WTC11 (cell line): ENCODE measurements at regions of chr22 and their contacts with region 1.

Region 1: DNA sequence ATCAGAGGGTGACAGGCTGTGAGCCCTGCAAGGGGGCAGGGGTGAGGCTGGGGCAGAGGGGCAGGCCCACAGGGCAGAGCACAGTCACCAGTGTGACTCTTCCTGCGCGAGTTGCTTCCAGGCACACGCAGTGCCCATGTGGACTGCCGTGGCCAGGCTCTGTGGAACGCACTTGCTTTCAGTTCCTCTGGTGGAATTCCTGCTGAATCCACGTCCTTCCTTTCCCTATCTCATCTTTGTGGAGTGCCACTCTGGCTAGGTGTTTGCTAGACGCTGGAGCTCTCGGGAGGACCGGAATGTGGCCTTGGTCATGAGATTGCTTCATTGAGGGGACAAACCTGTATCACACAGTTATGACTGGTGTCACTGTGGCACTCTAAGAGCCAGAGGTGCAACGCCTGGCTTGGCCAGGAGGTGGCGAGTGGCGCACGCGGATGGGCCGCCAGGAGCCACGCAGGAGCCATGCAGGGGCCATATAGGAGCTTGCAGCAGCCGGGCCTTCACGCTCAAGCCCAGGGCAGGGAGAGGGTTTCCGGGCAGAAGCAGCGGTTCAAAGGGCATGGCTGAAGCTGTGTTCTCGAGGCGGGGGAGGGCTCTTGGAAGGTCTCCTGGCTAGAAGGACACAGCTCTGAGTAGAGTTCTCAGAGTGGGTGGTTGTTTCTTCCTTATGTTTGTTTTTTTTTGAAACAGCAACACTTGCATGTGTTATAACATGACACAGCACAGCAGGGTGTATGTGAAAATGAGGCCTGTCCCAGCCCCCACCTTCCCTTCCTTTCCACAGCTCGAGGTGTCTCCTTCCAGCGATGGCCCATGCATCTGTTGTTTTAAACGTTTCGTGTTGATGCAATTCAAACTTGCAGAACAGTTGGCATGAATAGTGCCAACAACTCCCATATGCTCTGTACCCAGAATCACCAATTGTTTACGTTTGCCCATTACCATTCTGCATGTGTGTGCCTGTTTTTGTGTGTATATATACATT is 36.2 kb downstream of the TBC1D22A start:
- DNase-seq: peak; percentile 87
- ATAC-seq: peak; percentile 81
- H3K4me3 Mint-ChIP-seq: no peak overlapping the region
- H3K27ac Mint-ChIP-seq: no peak overlapping the region
- H3K4me1 Mint-ChIP-seq: peaks cover 3% of the 10 kb centered on the region
- H3K27me3 Mint-ChIP-seq: no peaks in the 10 kb centered on the region
- CTCF ChIP-seq: peak; percentile 93

Region 2: DNA sequence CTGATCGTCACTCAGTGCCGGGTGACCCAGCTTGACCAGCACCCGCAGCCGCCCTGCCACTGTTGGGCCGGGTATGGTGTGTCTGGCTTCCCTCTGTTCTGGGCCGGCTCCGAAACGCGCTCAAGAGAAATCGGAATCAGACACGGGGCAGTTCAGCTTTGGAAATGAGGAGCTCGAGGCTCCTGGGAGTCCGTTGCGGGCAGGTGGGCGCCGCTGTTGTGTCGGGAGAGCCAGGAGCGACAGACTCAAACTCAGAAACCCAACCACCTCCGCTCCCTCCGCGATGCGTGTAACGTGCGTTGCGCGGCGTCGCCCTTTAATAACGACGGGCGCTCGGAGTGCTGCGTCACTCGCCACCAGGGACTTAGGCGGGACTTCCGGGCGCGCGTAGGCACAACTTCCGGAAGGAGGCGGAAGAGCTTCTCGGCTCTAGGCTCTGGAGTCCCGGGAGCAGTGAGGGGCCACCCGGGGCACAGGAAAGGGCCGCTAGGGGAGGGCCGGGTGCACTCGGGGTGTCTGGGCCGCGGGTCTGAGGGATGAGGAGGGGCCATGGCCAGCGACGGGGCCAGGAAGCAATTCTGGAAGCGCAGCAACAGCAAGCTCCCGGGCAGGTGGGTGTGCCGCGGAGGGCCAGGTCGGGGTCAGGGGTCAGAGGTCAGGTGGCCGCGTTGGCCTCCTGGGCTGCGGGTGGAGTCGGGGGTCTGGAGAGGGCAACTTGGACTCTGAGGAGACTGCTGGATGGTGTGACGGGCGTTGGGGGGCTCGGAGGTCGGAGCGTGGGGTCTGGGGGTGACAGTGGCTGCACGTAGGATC is 36.2 kb before region 1 on chr22 and contains the start of gene TBC1D22A:
- CTCF ChIA-PET with region 1: interaction called, 23 read pairs
- POLR2A ChIA-PET with region 1: interaction called, 4 read pairs
- DNase-seq: peak; percentile 94
- ATAC-seq: peak; percentile 85
- H3K4me3 Mint-ChIP-seq: peak within 1 kb of the TSS; percentile 99
- H3K27ac Mint-ChIP-seq: peak within 1 kb of the TSS; percentile 99
- H3K4me1 Mint-ChIP-seq: peaks cover 20% of the 10 kb centered on the region
- H3K27me3 Mint-ChIP-seq: no peaks in the 10 kb centered on the region
- CTCF ChIP-seq: no peak
- total RNA-seq, gene TBC1D22A: 18.1 to 21.0 TPM (median 19.1 TPM) in 3 replicates

Region 3: DNA sequence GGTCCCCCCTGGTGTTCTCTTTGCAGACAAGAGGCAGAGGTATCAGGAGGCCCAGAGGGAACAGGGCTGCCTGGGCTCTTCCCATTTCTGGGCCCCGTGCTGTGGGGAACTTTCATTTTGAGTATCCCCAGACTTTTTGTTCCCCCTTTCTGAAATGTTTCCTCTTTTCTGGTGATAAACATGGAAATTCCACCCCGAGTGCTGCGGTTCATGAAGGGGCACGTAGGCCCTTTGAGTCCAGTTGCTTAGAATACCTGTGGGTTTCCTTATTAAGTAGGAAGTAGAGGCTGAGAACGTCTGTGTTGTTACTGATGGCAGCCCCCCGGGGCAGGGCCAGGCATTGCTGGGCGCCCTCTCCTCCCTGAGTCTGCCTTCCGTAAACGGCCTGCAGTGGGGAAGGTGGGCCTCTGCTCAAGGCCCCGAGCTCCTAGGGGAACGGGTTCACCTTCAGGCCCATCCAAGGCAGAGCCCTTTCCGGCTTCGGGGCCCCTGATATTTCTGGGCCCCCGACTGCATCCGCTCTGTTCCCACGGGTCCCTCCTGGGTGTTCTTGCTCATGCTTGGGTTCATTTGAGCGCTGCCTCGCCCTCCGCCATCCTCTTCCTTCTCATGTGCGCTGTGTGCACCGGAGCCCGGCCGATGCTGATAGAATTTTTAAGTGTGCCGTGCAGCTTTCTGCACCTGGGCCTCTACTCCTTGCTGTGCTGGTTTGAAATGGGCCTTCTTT is 24.2 kb before region 1 on chr22:
- CTCF ChIA-PET with region 1: interaction called, 27 read pairs
- POLR2A ChIA-PET with region 1: no interaction called
- DNase-seq: no peak
- ATAC-seq: no peak
- H3K4me3 Mint-ChIP-seq: no peak overlapping the region
- H3K27ac Mint-ChIP-seq: peak overlapping the region; percentile 84
- H3K4me1 Mint-ChIP-seq: peaks cover 15% of the 10 kb centered on the region
- H3K27me3 Mint-ChIP-seq: no peaks in the 10 kb centered on the region
- CTCF ChIP-seq: no peak

Region 4: DNA sequence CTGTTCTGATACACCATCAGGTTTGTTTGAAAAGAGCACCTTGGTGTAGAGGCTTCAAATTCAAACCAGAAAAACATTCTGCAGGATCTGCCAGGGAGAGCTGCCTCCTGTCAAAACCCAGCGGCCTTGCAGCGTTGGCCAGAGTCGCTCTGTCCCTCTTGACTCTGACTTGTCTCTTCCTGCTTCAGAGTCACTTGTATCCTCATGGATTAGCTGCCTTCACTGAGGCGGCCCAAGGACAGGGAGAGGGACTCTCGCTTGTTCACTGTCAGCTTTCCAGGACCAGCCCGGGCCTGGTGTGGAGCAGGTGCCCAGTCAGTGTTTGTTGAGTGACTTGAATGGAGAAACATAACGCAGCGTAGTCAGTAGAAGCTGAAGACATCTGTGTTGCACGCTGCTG is 18.2 kb before region 1 on chr22:
- CTCF ChIA-PET with region 1: interaction called, 27 read pairs
- POLR2A ChIA-PET with region 1: no interaction called
- DNase-seq: no peak
- ATAC-seq: no peak
- H3K4me3 Mint-ChIP-seq: no peak overlapping the region
- H3K27ac Mint-ChIP-seq: no peak overlapping the region
- H3K4me1 Mint-ChIP-seq: no peaks in the 10 kb centered on the region
- H3K27me3 Mint-ChIP-seq: no peaks in the 10 kb centered on the region
- CTCF ChIP-seq: no peak

Region 5: DNA sequence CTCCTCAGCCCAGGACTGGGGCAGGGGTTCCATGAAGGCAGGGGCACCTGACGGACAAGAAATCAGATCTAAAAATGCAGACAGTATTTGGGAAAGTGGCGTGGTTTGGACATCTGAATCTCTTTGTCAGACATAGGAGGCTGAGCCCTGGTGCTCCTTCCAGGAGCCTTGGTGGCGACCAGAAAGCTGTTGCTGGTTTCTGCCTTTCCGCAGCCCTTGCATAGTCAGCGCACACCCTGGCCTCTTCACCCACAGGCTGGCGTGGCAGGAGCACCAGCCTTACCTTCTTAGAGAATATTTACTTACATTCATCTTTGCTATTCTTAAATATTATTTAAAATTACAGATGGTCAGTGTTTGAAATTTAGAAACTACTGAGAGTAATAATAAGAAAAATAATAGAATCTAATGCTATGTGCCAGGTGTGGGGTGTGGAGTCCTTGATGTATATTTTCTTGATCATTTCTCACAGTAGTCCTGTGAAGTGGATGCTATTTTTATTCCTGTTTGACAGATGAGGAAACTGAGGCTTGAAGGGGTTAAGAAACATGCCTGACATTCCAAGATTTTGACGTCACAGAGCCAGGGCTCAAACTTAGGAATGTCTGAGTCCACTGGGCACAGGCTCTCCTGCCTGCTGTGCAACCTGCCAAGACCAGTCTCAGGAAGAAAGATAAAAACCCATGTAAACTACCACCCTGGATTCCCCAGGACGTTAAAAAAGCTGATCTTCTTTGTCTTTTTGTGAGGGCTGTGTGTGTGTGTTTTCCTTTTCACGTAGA is 15.3 kb after region 1 on chr22:
- CTCF ChIA-PET with region 1: interaction called, 21 read pairs
- POLR2A ChIA-PET with region 1: no interaction called
- DNase-seq: no peak
- ATAC-seq: no peak
- H3K4me3 Mint-ChIP-seq: no peak overlapping the region
- H3K27ac Mint-ChIP-seq: no peak overlapping the region
- H3K4me1 Mint-ChIP-seq: peaks cover 4% of the 10 kb centered on the region; the same call in 1 of the 2 replicates
- H3K27me3 Mint-ChIP-seq: no peaks in the 10 kb centered on the region
- CTCF ChIP-seq: no peak

Region 6: GRCh38 chr22:46827136-46827780 is 28.6 kb after region 1 on chr22:
- CTCF ChIA-PET with region 1: interaction called, 27 read pairs
- POLR2A ChIA-PET with region 1: no interaction called
- DNase-seq: peak; percentile 86
- ATAC-seq: peak; percentile 97
- H3K4me3 Mint-ChIP-seq: no peak overlapping the region
- H3K27ac Mint-ChIP-seq: peak overlapping the region; percentile 37; the same call in 1 of the 2 replicates
- H3K4me1 Mint-ChIP-seq: peaks cover 26% of the 10 kb centered on the region
- H3K27me3 Mint-ChIP-seq: no peaks in the 10 kb centered on the region
- CTCF ChIP-seq: peak; percentile 47

Region 7: GRCh38 chr22:46833228-46833627 is 34.6 kb after region 1 on chr22:
- CTCF ChIA-PET with region 1: interaction called, 22 read pairs
- POLR2A ChIA-PET with region 1: no interaction called
- DNase-seq: peak; percentile 67
- ATAC-seq: peak; percentile 95
- H3K4me3 Mint-ChIP-seq: no peak overlapping the region
- H3K27ac Mint-ChIP-seq: no peak overlapping the region
- H3K4me1 Mint-ChIP-seq: peaks cover 25% of the 10 kb centered on the region
- H3K27me3 Mint-ChIP-seq: no peaks in the 10 kb centered on the region; the same call in 1 of the 2 replicates
- CTCF ChIP-seq: no peak